AG04450 (cell line): ENCODE measurements at regions of chr19 and their contacts with region 1.

Region 1: DNA sequence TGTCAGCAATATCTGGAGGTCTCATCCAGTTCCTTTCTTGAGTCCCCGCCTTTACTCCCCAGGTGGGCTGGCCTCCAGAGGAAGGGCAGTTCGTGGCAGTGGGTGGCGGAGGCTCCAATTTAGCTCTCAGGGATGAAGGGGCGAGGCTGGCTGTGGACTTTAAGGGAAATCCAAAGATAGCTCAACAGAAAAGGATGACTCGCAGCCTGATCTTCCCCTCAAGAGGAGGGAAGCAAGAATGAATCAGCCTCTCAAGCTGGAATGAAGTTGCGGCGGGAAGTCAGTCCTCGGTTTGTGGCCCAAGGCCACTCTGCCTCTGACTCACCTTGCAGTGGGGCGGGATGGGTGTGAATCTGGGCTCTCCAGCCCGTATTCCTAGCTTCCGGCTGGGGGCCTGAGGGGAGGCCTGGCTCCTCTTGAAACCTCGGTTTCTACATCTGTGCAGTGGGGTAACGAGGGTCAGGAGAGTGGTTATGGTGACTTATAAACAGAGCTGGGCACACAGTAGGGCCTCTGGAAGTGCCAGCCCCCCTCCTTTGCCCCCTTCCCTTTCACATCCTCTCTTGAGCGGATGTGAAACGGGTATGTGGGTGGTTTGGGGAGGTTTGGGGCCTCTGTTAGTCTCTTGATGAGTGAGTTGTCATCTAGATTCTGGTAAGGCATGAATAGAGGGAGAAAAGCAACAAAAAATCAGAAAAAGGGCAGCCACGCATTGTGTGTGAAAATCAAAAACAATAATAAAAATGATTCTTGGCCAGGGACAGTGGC is 10.5 kb upstream of the SMG9 start:
- DNase-seq: peak; percentile 81
- H3K4me3 ChIP-seq: no peak overlapping the region
- H3K27ac ChIP-seq: peak overlapping the region; percentile 89
- H3K27me3 ChIP-seq: no peaks in the 10 kb centered on the region
- CTCF ChIP-seq: no peak

Region 2: GRCh38 chr19:43713208-43713607 is 52.1 kb before region 1 on chr19:
- CTCF ChIA-PET with region 1: no interaction called
- POLR2A ChIA-PET with region 1: no interaction called
- DNase-seq: no peak
- H3K4me3 ChIP-seq: no peak overlapping the region
- H3K27ac ChIP-seq: no peak overlapping the region
- H3K27me3 ChIP-seq: peaks cover 3% of the 10 kb centered on the region
- CTCF ChIP-seq: no peak

Region 3: GRCh38 chr19:43754503-43755255 is 10.6 kb before region 1 on chr19 and contains the start of gene SMG9:
- CTCF ChIA-PET with region 1: interaction called, 30 read pairs
- POLR2A ChIA-PET with region 1: interaction called, 14 read pairs
- DNase-seq: peak; percentile 94
- H3K4me3 ChIP-seq: peak within 1 kb of the TSS; percentile 88
- H3K27ac ChIP-seq: peak within 1 kb of the TSS; percentile 100
- H3K27me3 ChIP-seq: no peaks in the 10 kb centered on the region
- CTCF ChIP-seq: no peak
- polyA plus RNA-seq, gene SMG9: 9.2 and 12.1 TPM in 2 replicates